PC-9 (cell line): ENCODE measurements at regions of chr7 and their contacts with region 1.

Region 1: DNA sequence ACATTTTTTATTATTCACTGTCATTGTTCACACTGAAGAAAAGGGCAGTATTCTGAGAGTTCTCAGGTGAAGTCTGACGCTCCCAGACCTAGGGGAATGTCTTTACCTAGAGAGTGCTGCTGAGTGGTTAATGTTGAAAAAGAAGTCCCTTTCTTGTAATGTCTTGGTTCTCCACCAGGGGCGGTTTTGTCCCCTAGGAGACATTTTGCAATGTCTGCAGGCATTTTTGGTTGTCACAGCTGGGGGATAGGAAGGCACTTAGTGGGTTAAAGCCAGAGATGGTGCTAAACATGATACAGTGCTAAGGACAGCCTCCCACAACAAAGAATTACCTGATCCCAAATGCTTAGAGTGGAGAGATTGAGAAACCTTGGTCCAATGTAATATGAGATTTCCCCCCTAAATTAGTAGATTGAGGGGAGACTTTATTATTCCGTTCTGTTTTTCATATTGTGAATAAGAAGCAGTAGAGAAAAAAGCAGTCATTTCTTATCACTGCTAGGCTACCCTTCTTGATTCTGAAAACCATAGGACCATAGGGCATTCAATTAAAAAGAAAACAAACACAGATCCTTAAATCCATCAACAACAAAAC is 13.1 kb downstream of the UMAD1 start:
- DNase-seq: no peak
- H3K4me3 ChIP-seq: no peak overlapping the region
- H3K27ac ChIP-seq: no peak overlapping the region
- H3K4me1 ChIP-seq: no peaks in the 10 kb centered on the region
- H3K27me3 ChIP-seq: no peaks in the 10 kb centered on the region
- CTCF ChIP-seq: peak; percentile 71

Region 2: DNA sequence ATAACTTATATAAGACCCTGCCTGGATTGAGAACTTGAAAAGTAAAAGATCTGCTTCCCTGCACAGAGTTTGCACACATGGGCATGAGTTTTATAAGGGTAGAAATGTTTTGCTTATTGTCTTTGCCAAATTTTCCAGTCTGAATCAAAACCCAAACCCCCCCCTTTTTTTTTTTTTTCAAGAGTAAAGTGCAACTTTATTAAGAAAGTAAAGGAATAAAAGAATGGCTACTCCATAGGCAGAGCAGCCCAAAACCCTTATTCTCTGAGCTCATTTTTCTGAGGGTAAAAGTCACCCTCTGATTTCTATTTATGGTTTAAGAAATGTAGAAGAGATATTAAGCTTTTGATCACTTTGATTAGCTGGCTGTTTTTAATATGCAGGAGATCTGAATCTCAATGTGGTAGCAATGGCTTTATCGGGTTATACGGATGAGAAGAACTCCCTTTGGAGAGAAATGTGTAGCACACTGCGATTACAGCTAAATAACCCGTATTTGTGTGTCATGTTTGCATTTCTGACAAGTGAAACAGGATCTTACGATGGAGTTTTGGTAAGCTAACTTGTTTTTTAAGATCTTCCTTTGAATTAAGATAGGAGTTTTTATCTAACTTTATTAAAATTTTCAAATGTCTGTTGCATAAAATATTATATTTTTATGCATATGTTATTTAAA is 68.3 kb before region 1 on chr7:
- CTCF ChIA-PET with region 1: no interaction called
- POLR2A ChIA-PET with region 1: interaction called, 13 read pairs
- intact Hi-C with region 1: no loop called
- DNase-seq: no peak
- H3K4me3 ChIP-seq: no peak overlapping the region
- H3K27ac ChIP-seq: no peak overlapping the region
- H3K4me1 ChIP-seq: no peaks in the 10 kb centered on the region
- H3K27me3 ChIP-seq: no peaks in the 10 kb centered on the region
- CTCF ChIP-seq: no peak

Region 3: GRCh38 chr7:7630626-7631329 is 22.9 kb before region 1 on chr7:
- CTCF ChIA-PET with region 1: no interaction called
- POLR2A ChIA-PET with region 1: no interaction called
- intact Hi-C with region 1: no loop called
- DNase-seq: no peak
- H3K4me3 ChIP-seq: no peak overlapping the region
- H3K27ac ChIP-seq: no peak overlapping the region
- H3K4me1 ChIP-seq: no peaks in the 10 kb centered on the region
- H3K27me3 ChIP-seq: no peaks in the 10 kb centered on the region
- CTCF ChIP-seq: no peak

Region 4: DNA sequence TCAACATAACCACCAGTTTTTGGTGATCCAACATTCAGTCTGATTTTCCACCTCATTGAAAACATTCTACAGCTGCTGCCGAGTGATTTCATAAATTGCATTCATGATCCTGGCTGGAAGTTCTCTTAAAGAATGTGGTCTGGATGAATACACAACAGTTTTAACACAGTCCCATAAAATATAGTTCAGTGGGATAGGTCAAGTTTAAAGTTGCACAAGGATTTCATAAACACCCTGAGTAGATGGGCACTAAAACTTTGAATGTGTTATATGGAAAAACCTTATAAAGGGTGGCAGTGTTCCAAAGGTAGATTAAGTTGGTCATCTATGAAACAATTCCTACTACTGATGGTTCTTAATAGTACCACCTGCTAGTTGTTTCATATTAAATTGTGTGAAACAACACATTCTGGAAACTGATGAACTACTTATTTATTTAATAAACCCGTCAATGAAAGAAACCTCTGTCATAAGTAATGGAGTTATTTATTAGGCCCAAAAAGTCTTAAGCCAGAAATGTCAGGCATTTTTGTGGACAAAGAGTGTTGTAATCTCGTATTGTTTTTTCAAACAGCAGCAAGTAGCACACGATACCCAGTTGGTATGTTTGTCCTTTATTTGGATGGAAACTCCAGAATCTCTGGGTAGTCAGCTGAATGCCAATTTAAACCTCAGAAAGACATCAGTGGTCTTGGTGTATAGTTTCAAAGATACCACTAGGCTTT is 79.0 kb after region 1 on chr7:
- CTCF ChIA-PET with region 1: no interaction called
- POLR2A ChIA-PET with region 1: no interaction called
- intact Hi-C with region 1: no loop called
- DNase-seq: no peak
- H3K4me3 ChIP-seq: no peak overlapping the region
- H3K27ac ChIP-seq: no peak overlapping the region
- H3K4me1 ChIP-seq: peaks cover 4% of the 10 kb centered on the region; the same call in 1 of the 2 replicates
- H3K27me3 ChIP-seq: no peaks in the 10 kb centered on the region
- CTCF ChIP-seq: no peak